A673 (cell line): ENCODE measurements at regions of chr18 and their contacts with region 1.

Region 1: DNA sequence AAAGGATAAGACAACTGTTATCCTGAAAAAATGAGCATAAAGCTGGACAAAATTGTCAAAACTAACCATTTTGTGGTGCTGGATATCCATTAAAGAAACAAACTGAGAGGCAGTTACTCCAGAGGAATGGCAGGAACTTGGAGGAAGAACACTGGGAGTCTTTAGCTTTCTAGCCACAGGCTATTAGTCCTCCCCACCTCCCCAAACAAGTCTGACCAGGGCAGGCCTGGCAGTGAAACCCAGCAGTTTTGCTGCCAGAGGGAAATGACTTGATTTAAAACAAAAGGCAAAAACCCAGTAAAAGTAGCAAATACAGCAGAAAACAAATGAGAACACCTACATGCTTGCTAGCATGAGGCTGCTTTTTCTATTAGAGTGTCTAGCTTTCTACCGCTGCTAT is 34.9 kb downstream of the OSBPL1A start:
- DNase-seq: no peak
- H3K4me3 ChIP-seq: no peak overlapping the region
- H3K27ac ChIP-seq: no peak overlapping the region
- H3K4me1 ChIP-seq: no peaks in the 10 kb centered on the region
- H3K27me3 ChIP-seq: no peaks in the 10 kb centered on the region
- CTCF ChIP-seq: no peak

Region 2: GRCh38 chr18:23077493-23078256 is 1285.1 kb before region 1 on chr18:
- CTCF ChIA-PET with region 1: no interaction called
- POLR2A ChIA-PET with region 1: no interaction called
- intact Hi-C with region 1: no loop called
- DNase-seq: peak; percentile 59
- H3K4me3 ChIP-seq: no peak overlapping the region
- H3K27ac ChIP-seq: no peak overlapping the region
- H3K4me1 ChIP-seq: no peaks in the 10 kb centered on the region
- H3K27me3 ChIP-seq: no peaks in the 10 kb centered on the region
- CTCF ChIP-seq: peak; percentile 51

Region 3: GRCh38 chr18:24488824-24489493 is 126.2 kb after region 1 on chr18:
- CTCF ChIA-PET with region 1: interaction called, 20 read pairs
- POLR2A ChIA-PET with region 1: no interaction called
- intact Hi-C with region 1: loop called (anchors 2 kb)
- DNase-seq: peak; percentile 59
- H3K4me3 ChIP-seq: no peak overlapping the region
- H3K27ac ChIP-seq: no peak overlapping the region
- H3K4me1 ChIP-seq: no peaks in the 10 kb centered on the region
- H3K27me3 ChIP-seq: peaks cover 5% of the 10 kb centered on the region
- CTCF ChIP-seq: peak; percentile 73